ENCODE measurements at regions of chr5 and their contacts with region 1.

Region 1: DNA sequence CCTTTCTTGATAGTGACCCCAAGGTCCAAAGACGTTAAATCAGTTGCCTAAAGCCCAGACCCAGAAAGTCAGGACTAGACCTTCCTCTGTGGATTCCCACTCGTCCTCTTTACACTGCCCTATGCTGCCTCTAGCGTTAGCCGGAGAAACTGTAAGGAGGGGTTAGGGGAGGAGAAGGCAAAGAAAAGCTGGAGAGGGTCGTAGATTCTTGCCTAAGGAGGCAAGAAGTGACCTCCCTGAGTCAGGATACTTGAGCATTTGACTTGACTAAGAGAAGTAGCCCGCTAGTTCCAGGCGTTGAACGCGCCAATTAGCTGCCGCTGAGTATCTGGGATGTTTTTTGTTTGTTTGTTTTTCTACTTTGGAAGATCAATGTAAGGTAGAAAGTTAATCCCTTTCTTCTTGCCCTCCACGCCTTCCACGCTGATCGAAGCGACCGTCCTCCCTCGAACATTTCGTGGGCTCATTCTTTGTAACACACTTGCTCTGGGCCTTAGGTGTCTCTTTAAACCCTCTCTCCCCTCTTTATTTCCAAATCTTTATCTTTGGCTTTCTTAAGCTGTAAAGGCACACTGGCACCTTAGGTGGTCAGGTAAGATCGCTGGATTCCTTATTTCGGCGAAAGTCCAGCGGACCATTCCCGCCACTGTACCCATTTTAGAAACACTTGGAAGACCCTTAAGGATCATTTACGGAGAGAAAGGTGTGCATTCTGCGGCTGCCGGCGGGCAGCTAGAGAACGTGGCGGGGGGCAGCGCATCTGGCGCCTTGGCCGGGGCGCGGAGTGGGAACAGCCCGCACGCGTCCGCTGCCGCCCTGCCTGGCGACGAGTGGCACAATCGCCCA is 5.1 kb upstream of the RGMB start:
- DNase-seq: peak; percentile 67
- H3K4me3 Mint-ChIP-seq: peak overlapping the region; percentile 95
- H3K27ac Mint-ChIP-seq: no peak overlapping the region
- H3K4me1 Mint-ChIP-seq: peaks cover 20% of the 10 kb centered on the region
- H3K27me3 Mint-ChIP-seq: no peaks in the 10 kb centered on the region
- CTCF ChIP-seq: peak; percentile 92

Region 2: DNA sequence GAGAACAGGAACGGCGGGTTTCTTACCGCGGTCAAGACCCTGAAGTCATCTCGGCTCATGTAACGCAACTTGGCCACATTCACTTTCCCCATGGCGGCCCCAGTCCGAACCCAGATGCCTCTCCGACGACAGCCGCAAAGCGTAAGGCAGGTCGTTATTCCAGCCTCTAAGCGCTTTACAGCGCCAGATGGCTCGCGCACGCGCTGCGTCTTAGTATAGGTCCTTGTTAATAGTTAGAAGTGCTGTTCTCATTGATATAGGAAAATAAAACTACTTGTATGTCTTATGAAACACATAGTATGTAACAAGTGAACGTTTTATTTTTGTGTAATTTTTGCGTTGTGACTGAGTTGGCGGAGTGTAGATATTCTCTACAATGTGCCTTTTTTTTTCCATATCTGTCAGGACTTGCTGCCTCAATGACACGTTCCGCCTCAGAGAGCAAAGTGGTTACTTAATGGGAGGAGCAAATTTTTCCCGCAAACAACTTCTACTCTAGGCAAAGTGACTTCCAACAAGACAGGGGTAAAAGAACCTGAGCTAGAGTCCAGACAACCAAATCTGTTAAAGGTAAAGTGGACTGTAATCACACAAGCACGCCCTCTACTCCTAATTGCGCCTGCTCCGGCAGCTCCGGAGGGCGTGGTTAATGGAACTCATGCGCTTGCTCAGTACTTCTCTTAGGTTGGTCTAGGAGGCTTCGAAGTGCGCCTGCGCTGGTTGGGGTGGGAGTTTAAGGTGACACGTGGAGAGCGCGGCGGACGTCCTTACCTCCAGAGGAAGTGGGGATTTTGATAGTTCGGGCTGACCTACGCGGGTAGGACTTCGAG is 1585.1 kb before region 1 on chr5 and contains the start of gene RIOK2:
- CTCF ChIA-PET with region 1: interaction called, 10 read pairs
- POLR2A ChIA-PET with region 1: interaction called, 21 read pairs
- intact Hi-C with region 1: loop called (anchors 1 kb)
- DNase-seq: peak; percentile 97
- H3K4me3 Mint-ChIP-seq: peak within 1 kb of the TSS; percentile 77
- H3K27ac Mint-ChIP-seq: peak within 1 kb of the TSS; percentile 100
- H3K4me1 Mint-ChIP-seq: peaks cover 35% of the 10 kb centered on the region
- H3K27me3 Mint-ChIP-seq: no peaks in the 10 kb centered on the region
- CTCF ChIP-seq: no peak
- total RNA-seq, gene RIOK2: 45.7 and 50.9 TPM in 2 replicates

Region 3: GRCh38 chr5:97231025-97231636 is 1537.3 kb before region 1 on chr5:
- CTCF ChIA-PET with region 1: interaction called, 31 read pairs
- POLR2A ChIA-PET with region 1: interaction called, 3 read pairs
- intact Hi-C with region 1: loop called (anchors 1 kb)
- DNase-seq: peak; percentile 77
- H3K4me3 Mint-ChIP-seq: no peak overlapping the region
- H3K27ac Mint-ChIP-seq: no peak overlapping the region
- H3K4me1 Mint-ChIP-seq: peaks cover 7% of the 10 kb centered on the region
- H3K27me3 Mint-ChIP-seq: no peaks in the 10 kb centered on the region
- CTCF ChIP-seq: peak; percentile 75

Region 4: GRCh38 chr5:97425511-97425910 is 1342.9 kb before region 1 on chr5:
- CTCF ChIA-PET with region 1: interaction called, 4 read pairs
- POLR2A ChIA-PET with region 1: no interaction called
- intact Hi-C with region 1: loop called (anchors 1 kb)
- DNase-seq: peak; percentile 23
- H3K4me3 Mint-ChIP-seq: no peak overlapping the region
- H3K27ac Mint-ChIP-seq: no peak overlapping the region
- H3K4me1 Mint-ChIP-seq: no peaks in the 10 kb centered on the region
- H3K27me3 Mint-ChIP-seq: no peaks in the 10 kb centered on the region
- CTCF ChIP-seq: peak; percentile 17

Region 5: GRCh38 chr5:98750693-98751092 is 17.7 kb before region 1 on chr5:
- CTCF ChIA-PET with region 1: interaction called, 29 read pairs
- POLR2A ChIA-PET with region 1: interaction called, 3 read pairs
- intact Hi-C with region 1: no loop called
- DNase-seq: peak; percentile 41
- H3K4me3 Mint-ChIP-seq: no peak overlapping the region
- H3K27ac Mint-ChIP-seq: no peak overlapping the region
- H3K4me1 Mint-ChIP-seq: no peaks in the 10 kb centered on the region
- H3K27me3 Mint-ChIP-seq: no peaks in the 10 kb centered on the region
- CTCF ChIP-seq: peak; percentile 31

Region 6: DNA sequence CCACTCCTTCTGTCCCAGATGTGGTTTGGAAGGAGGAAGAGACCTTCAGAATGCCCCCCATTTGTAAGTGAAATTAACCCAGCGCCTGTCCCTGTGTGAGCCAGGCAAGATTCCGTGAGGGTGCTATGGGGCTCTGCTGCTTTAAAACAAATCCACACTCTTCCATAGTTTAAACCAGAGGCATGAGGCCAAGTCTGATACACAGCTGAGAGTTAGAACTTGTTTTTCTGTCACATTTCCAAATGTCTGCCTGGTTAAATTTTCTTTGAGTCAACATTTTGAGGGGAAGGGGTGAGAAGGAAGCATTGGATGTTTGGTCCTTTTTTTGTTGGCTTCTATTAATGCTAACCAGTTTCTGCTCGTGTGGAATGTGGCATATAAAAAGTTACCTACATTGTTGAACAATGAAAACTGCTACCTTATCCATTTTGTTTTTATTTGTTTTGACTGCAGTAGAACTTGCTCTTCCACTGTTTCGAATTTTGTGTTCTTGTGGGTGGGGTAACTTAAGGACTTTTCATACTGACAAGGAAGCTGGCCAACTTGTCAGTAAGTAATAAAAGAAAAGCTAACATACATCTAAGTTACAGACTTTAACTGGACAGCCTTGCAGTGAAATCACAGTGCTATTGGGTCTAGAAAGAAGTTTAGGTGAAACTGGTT is 17.9 kb after region 1 on chr5:
- CTCF ChIA-PET with region 1: interaction called, 86 read pairs
- POLR2A ChIA-PET with region 1: interaction called, 7 read pairs
- intact Hi-C with region 1: no loop called
- DNase-seq: no peak
- H3K4me3 Mint-ChIP-seq: no peak overlapping the region
- H3K27ac Mint-ChIP-seq: peak overlapping the region; percentile 28
- H3K4me1 Mint-ChIP-seq: peaks cover 40% of the 10 kb centered on the region
- H3K27me3 Mint-ChIP-seq: no peaks in the 10 kb centered on the region
- CTCF ChIP-seq: no peak